G401 (cell line): ENCODE measurements at regions of chr11 and their contacts with region 1.

Region 1: DNA sequence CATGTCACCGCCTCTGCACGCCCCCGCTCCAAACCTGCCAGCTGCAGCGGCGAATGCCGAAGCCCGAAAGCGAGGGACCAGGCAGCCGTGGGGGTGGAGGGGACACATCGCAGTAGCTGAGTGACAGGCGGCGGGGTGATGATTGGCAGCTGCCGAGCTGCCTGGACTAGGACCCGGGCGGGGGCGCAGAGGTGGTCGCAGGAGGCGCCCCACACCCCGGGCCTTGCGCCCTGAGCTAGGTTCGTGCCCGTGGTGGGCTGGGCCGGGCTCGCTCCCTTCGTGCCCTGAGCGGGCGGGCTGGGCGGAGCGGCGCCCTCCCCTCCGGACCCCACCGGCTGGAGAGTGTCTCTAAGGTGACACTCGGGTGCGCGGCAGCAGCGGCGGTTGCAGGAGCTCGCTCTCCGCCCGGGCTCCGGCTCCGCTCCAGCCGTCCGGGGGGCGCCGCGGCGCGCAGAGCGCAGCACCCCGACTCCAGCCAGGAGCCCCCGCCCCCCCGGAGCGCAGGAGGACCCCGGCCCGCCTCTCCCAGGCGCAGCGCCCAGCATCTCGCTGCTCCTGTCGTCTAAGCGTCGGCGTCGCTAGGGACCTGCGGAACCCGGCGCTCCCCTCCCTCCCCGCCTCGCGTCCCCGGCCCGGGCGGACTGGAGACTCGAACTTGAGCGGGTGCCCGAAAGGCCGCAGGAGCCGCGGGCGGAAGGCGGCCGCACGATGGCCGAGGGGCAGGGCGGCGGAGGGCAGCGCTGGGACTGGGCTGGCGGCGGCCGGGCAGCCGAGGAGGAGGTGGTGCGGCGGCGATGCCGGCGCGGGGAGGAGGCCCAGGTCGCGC is 14.5 kb upstream of the DGKZ start:
- DNase-seq: no peak

Region 2: DNA sequence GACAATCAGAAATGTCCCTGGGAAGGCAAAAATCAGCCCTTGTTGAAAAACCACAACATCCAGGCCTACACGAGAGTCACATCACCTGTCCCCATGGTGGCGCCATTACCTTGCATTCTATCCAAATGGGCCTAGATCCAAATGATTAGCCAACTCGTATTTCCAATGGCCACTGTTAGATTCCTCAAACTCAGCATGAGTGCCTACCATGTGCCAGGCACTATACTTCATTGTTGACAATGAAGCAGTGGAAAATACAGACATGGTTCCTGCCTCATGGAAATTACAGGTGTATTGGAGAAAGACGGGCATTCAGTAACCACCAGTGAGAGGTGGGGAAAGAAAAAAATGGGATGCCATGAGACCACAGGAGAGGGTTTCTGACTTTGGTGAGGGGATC is 85.1 kb before region 1 on chr11:
- in situ Hi-C with region 1: loop called (anchors 5 kb)
- DNase-seq: peak; percentile 47

Region 3: GRCh38 chr11:46404476-46405017 is 71.8 kb after region 1 on chr11:
- in situ Hi-C with region 1: no loop called
- DNase-seq: no peak

Region 4: GRCh38 chr11:46438211-46438610 is 105.4 kb after region 1 on chr11:
- in situ Hi-C with region 1: no loop called
- DNase-seq: peak; percentile 68